PC-3 (cell line): ENCODE measurements at regions of chr12 and their contacts with region 1.

Region 1: GRCh38 chr12:45170456-45171042 is 45.3 kb upstream of the ANO6 start:
- DNase-seq: peak; percentile 85
- ATAC-seq: peak; percentile 84
- H3K4me3 ChIP-seq: no peak overlapping the region
- H3K27ac ChIP-seq: no peak overlapping the region
- H3K4me1 ChIP-seq: no peaks in the 10 kb centered on the region
- H3K27me3 ChIP-seq: no peaks in the 10 kb centered on the region
- CTCF ChIP-seq: peak; percentile 95

Region 2: DNA sequence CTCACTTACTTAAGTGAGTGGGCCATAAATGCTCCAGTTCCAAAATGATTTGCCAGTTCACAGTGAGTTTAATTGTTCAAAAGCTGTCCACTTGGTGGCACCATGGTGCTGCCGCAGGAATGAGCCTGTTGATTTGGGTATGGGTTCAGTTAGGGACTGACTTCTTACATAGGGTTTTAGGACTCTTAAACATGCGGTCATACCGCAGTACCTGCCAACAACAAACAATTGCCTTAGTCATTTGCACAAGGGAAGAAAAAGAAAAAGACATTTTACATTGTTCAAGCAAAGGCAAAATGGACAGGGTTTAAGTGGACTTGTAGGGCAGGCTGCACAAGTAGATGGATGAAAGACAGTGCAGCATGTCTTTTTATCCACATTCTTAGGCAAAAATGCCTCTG is 39.7 kb before region 1 on chr12:
- CTCF ChIA-PET with region 1: interaction called, 6 read pairs
- POLR2A ChIA-PET with region 1: no interaction called
- intact Hi-C with region 1: loop called (anchors 2 kb)
- DNase-seq: peak; percentile 86
- ATAC-seq: peak; percentile 78
- H3K4me3 ChIP-seq: no peak overlapping the region
- H3K27ac ChIP-seq: no peak overlapping the region
- H3K4me1 ChIP-seq: peaks cover 6% of the 10 kb centered on the region; the same call in 1 of the 2 replicates
- H3K27me3 ChIP-seq: 0 out of 2 replicates have a peak, but pooled peaks cover 4% of the 10 kb centered on the region
- CTCF ChIP-seq: peak; percentile 95

Region 3: GRCh38 chr12:45268672-45269411 is 98.3 kb after region 1 on chr12:
- CTCF ChIA-PET with region 1: no interaction called
- POLR2A ChIA-PET with region 1: no interaction called
- intact Hi-C with region 1: loop called (anchors 2 kb)
- DNase-seq: peak; percentile 95
- ATAC-seq: peak; percentile 73
- H3K4me3 ChIP-seq: peak overlapping the region; percentile 41
- H3K27ac ChIP-seq: peak overlapping the region; percentile 88
- H3K4me1 ChIP-seq: peaks cover 32% of the 10 kb centered on the region
- H3K27me3 ChIP-seq: no peaks in the 10 kb centered on the region
- CTCF ChIP-seq: peak; percentile 87

Region 4: GRCh38 chr12:45655201-45655600 is 484.7 kb after region 1 on chr12:
- CTCF ChIA-PET with region 1: interaction called, 16 read pairs
- POLR2A ChIA-PET with region 1: no interaction called
- intact Hi-C with region 1: no loop called
- DNase-seq: peak; percentile 54
- ATAC-seq: peak; percentile 98
- H3K4me3 ChIP-seq: no peak overlapping the region
- H3K27ac ChIP-seq: no peak overlapping the region
- H3K4me1 ChIP-seq: no peaks in the 10 kb centered on the region
- H3K27me3 ChIP-seq: no peaks in the 10 kb centered on the region
- CTCF ChIP-seq: peak; percentile 43; the same call in 1 of the 2 replicates